Esophagus squamous epithelium (tissue), 5 donors: ENCODE measurements at regions of chr19 and their contacts with region 1.

Region 1: GRCh38 chr19:49676690-49677231 is 310 bp upstream of the PRMT1 start:
- DNase-seq: peak; percentile 98
- H3K4me3 ChIP-seq: peak overlapping the region; percentile 82 to 100 (median 92)
- H3K27ac ChIP-seq: peak overlapping the region; percentile 92 to 97 (median 96)
- H3K4me1 ChIP-seq: peaks cover 29 to 64% (median 40%) of the 10 kb centered on the region in 3 donors
- H3K27me3 ChIP-seq: no peaks in the 10 kb centered on the region
- CTCF ChIP-seq: peak in 1 of 6 experiments; percentile 15
- POLR2A ChIP-seq: no peak

Region 2: DNA sequence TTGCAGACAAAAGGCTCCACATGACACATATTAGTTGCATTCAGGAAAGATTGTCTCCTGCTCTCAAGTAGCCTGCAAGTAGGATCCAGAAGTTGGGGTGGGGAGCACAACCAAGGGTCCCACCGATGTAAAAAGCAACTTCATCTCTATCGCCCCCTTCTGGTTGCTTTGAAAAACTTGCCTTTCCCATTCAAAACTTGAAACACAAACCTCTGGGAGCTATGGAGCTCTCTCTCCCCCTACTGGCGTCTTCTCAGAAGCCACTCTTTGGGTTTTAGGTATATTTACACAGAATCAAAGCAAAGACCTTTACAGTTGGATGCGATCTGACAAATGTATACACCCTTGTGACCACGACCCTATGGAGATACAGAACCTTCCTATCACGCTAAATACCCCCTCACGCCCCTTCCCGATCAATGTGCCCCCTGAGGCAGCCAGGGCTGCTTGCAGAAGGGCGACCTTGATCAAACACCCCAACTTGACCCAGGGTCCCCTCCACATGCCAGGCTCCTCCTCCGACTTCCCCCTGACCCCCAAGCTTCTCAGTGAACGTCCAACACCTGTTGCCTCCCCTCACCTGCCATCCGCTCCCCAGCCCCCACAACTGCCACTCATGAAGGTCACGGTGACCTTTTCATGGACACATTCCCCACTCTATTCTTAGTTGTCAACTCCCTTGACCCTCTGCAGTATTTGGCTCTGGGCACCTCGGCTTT is 106.5 kb before region 1 on chr19:
- intact Hi-C with region 1: loop called (anchors 10 kb)
- DNase-seq: no peak
- H3K4me3 ChIP-seq: no peak overlapping the region
- H3K27ac ChIP-seq: no peak overlapping the region
- H3K4me1 ChIP-seq: peaks cover 0 to 44% (median 12%) of the 10 kb centered on the region in 3 donors
- H3K27me3 ChIP-seq: no peaks in the 10 kb centered on the region
- CTCF ChIP-seq: peak; percentile 96 to 99 (median 98)
- POLR2A ChIP-seq: no peak

Region 3: DNA sequence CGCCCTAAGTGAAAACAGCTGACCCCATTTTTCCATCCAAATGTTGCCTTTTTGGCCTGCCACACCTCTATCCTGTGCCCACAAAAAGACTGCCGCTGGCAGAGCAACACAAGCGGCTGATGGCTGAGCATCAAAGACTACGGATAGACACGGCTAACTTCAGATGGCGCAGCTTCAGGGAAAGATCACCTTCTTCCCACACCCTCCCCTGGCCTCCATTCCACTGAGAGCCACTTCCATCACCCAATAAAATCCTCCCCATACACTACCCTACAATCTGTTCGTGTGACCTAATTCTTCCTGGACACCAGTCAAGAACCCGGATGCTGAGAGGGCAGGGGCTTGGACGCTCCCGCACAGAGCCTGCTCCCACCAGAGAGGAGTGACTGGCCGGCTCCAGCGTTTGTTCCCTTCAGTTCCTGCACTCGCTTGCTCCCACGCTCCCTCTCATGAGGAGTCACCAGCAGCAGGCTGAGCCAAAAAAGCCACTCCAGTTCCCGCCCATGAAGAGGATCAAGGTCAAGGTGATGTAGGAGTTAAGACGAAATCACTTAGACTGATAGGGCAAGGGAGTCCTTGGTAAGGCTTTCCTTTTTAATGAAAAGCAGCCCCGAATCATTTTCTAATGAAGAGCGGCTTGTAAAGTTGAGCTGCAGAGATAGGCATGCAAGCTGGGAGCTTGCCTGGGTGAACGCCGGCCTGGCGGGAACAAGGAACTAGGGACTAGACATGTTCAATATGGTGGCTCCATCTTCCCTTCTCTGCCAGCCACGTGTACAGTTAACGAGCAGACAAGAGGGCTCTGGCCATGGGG is 50.7 kb after region 1 on chr19:
- intact Hi-C with region 1: no loop called
- DNase-seq: no peak
- H3K4me3 ChIP-seq: no peak overlapping the region
- H3K27ac ChIP-seq: peak overlapping the region in 1 of 4 donors; percentile 7
- H3K4me1 ChIP-seq: no peaks in the 10 kb centered on the region
- H3K27me3 ChIP-seq: no peaks in the 10 kb centered on the region
- CTCF ChIP-seq: no peak
- POLR2A ChIP-seq: no peak

Region 4: GRCh38 chr19:49758292-49758691 is 81.5 kb after region 1 on chr19:
- intact Hi-C with region 1: no loop called
- DNase-seq: no peak
- H3K4me3 ChIP-seq: no peak overlapping the region
- H3K27ac ChIP-seq: no peak overlapping the region
- H3K4me1 ChIP-seq: no peaks in the 10 kb centered on the region
- H3K27me3 ChIP-seq: no peaks in the 10 kb centered on the region
- CTCF ChIP-seq: no peak
- POLR2A ChIP-seq: no peak